ENCODE measurements at regions of chr18 and their contacts with region 1.

Region 1: DNA sequence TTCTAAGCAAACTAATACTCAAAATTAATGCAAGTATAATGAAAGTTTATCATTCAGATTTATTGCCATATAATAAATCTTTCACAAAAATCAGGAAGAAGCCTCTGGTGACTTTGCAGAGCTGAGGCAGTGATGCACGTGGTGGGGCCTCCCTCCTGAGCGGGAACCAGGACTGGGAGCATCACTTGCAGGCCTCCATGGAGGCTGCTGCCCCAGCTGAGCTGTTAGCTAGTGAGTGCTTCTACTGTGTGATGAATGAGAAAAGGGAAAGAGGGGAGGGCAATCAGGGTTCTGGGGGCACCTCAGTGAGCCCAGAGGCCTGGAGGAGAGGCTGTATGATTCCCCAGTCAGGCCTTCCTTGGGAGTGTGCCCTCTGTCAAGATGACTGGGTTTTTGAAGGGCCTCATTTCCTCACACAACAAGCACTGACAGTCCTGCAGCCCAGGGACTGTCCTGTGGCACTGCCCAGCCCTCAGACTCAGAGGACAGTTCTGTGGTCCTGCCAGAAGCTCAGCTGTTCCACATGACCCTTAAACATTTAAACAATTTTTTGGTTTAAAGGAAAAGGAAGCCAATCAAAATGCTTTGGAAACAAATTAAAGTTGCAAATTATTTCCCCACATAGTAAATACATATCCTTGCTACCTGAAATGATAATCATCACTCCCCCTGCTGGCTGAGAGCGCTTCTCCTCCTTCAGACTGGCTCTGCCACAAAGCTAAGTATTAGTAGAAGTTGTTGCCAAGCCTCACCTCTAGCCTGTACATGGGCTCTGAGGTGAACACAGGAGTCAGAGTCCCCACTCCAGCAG is 90.9 kb upstream of the SMAD7 start:
- DNase-seq: no peak
- H3K4me3 ChIP-seq: no peak overlapping the region
- CTCF ChIP-seq: peak; percentile 69

Region 2: GRCh38 chr18:49021433-49022129 is 20.1 kb before region 1 on chr18:
- CTCF ChIA-PET with region 1: interaction called, 84 read pairs
- POLR2A ChIA-PET with region 1: no interaction called
- DNase-seq: no peak
- H3K4me3 ChIP-seq: no peak overlapping the region
- CTCF ChIP-seq: peak; percentile 50

Region 3: GRCh38 chr18:49055754-49056172 is 14.1 kb after region 1 on chr18:
- CTCF ChIA-PET with region 1: interaction called, 68 read pairs
- POLR2A ChIA-PET with region 1: no interaction called
- DNase-seq: no peak
- H3K4me3 ChIP-seq: no peak overlapping the region
- CTCF ChIP-seq: no peak